Activated CD4-positive, alpha-beta T cell treated with anti-CD3 and anti-CD28 coated beads for 36 hours (primary cell): ENCODE measurements at regions of chr4 and their contacts with region 1.

Region 1: DNA sequence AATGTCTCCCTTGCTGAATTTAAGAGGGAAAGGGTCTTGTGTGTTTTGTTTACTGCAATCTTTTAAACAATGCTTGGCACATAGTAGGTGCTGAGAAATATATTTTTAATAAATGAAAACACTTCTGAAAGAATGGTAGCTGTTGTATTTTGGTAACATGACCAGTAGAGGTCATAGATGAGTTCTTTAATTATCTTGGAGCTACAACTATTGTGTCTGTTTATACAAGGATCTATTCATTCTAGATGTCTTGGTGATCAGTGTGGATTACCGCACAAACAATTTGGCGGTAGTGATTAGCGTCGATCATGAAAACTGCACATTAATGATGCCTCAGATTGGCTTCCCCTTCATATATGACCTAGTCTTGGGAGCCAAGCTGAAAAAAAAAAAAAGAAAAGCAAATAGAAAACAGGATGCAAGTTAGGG is 21.4 kb upstream of the SCRG1 start:
- DNase-seq: no peak
- ATAC-seq: no peak
- H3K4me3 Mint-ChIP-seq: no peak overlapping the region
- H3K27ac Mint-ChIP-seq: no peak overlapping the region
- H3K4me1 Mint-ChIP-seq: peaks cover 8% of the 10 kb centered on the region
- H3K27me3 Mint-ChIP-seq: no peaks in the 10 kb centered on the region

Region 2: DNA sequence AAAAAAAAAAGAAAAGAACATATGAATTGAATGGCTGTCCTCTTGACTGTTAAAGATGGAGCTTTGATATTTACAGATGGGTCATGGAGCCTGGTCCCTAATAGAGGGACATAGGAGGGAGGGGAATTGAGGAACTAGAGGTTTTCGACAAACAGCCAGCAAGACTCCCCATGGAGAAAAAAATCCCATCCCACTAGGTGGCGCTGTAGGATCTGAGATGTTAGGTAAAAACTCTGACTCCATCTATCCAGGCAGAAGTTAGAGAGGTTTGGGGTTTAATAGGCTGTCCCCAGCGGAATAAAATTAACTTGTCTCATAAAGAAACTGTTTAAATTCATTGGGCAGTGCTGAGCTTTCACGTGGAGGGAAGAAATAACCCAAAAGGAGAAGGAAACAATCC is 132.0 kb before region 1 on chr4:
- CTCF ChIA-PET with region 1: interaction called, 6 read pairs
- POLR2A ChIA-PET with region 1: no interaction called
- intact Hi-C with region 1: loop called (anchors 1 kb)
- DNase-seq: peak; percentile 86
- ATAC-seq: peak; percentile 46
- H3K4me3 Mint-ChIP-seq: no peak overlapping the region
- H3K27ac Mint-ChIP-seq: peak overlapping the region; percentile 62
- H3K4me1 Mint-ChIP-seq: peaks cover 16% of the 10 kb centered on the region
- H3K27me3 Mint-ChIP-seq: no peaks in the 10 kb centered on the region

Region 3: GRCh38 chr4:173301518-173302201 is 118.7 kb before region 1 on chr4:
- CTCF ChIA-PET with region 1: interaction called, 18 read pairs
- POLR2A ChIA-PET with region 1: no interaction called
- intact Hi-C with region 1: no loop called
- DNase-seq: peak; percentile 31
- ATAC-seq: peak; percentile 81
- H3K4me3 Mint-ChIP-seq: no peak overlapping the region
- H3K27ac Mint-ChIP-seq: no peak overlapping the region
- H3K4me1 Mint-ChIP-seq: peaks cover 2% of the 10 kb centered on the region
- H3K27me3 Mint-ChIP-seq: no peaks in the 10 kb centered on the region

Region 4: GRCh38 chr4:173318648-173319211 is 101.6 kb before region 1 on chr4:
- CTCF ChIA-PET with region 1: interaction called, 11 read pairs
- POLR2A ChIA-PET with region 1: no interaction called
- intact Hi-C with region 1: loop called (anchors 1 kb)
- DNase-seq: no peak
- ATAC-seq: peak; percentile 88
- H3K4me3 Mint-ChIP-seq: no peak overlapping the region
- H3K27ac Mint-ChIP-seq: no peak overlapping the region
- H3K4me1 Mint-ChIP-seq: peaks cover 11% of the 10 kb centered on the region
- H3K27me3 Mint-ChIP-seq: no peaks in the 10 kb centered on the region

Region 5: DNA sequence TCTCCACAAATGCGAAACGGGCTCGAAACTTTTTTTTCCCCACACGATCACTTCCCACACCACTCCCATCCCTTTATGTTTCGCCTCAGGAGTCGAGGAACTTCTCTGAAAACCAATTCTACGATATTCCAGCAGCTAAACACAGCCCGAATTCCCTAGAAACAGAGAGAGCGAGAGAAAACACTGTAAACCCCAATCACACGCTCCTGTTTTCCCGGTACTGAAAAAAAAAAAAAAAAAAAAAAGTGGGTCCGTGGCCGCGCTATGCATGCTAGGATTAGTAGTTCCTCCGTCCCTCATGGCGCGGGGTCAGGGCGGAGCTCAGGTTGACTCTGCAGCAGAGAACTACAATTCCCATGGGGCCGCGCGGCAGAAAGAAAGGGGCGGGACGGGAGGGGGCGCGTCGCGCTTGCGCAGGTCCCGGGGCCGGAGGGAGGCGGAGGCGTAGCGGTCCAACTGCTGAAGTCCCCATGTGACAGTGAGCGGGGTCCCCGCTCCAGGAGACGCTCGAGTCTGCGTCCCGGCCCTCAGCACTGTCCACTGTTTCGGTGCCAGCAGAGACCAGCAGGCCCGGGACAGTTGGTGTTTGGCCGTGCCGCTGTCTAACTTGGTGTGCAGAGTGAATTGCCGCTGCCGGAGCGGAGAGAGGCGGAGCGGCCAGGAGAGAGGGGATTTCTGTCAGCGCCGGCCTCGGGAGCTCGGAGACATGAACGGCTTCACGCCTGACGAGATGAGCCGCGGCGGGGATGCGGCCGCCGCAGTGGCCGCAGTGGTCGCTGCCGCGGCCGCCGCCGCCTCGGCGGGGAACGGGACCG is 49.7 kb before region 1 on chr4 and contains the start of gene SAP30:
- CTCF ChIA-PET with region 1: interaction called, 8 read pairs
- POLR2A ChIA-PET with region 1: no interaction called
- intact Hi-C with region 1: loop called in 1 of 2 experiments (anchors 2 kb)
- DNase-seq: peak; percentile 99
- ATAC-seq: peak; percentile 88
- H3K4me3 Mint-ChIP-seq: peak within 1 kb of the TSS; percentile 93
- H3K27ac Mint-ChIP-seq: peak within 1 kb of the TSS; percentile 100
- H3K4me1 Mint-ChIP-seq: peaks cover 31% of the 10 kb centered on the region
- H3K27me3 Mint-ChIP-seq: peaks cover 8% of the 10 kb centered on the region
- total RNA-seq, gene SAP30: 22.0 to 29.3 TPM

Region 6: GRCh38 chr4:173494013-173494970 is 74.0 kb after region 1 on chr4:
- CTCF ChIA-PET with region 1: interaction called, 17 read pairs
- POLR2A ChIA-PET with region 1: no interaction called
- intact Hi-C with region 1: loop called (anchors 1 kb)
- DNase-seq: peak; percentile 79
- ATAC-seq: peak; percentile 97
- H3K4me3 Mint-ChIP-seq: peak overlapping the region; percentile 69
- H3K27ac Mint-ChIP-seq: peak overlapping the region; percentile 17
- H3K4me1 Mint-ChIP-seq: peaks cover 10% of the 10 kb centered on the region
- H3K27me3 Mint-ChIP-seq: peaks cover 33% of the 10 kb centered on the region

Region 7: GRCh38 chr4:173635395-173635794 is 215.1 kb after region 1 on chr4:
- CTCF ChIA-PET with region 1: no interaction called
- POLR2A ChIA-PET with region 1: no interaction called
- intact Hi-C with region 1: no loop called
- DNase-seq: no peak
- ATAC-seq: no peak
- H3K4me3 Mint-ChIP-seq: no peak overlapping the region
- H3K27ac Mint-ChIP-seq: no peak overlapping the region
- H3K4me1 Mint-ChIP-seq: no peaks in the 10 kb centered on the region
- H3K27me3 Mint-ChIP-seq: no peaks in the 10 kb centered on the region

Region 8: GRCh38 chr4:173698557-173699262 is 278.4 kb after region 1 on chr4:
- CTCF ChIA-PET with region 1: no interaction called
- POLR2A ChIA-PET with region 1: no interaction called
- intact Hi-C with region 1: no loop called
- DNase-seq: no peak
- ATAC-seq: no peak
- H3K4me3 Mint-ChIP-seq: no peak overlapping the region
- H3K27ac Mint-ChIP-seq: no peak overlapping the region
- H3K4me1 Mint-ChIP-seq: no peaks in the 10 kb centered on the region
- H3K27me3 Mint-ChIP-seq: no peaks in the 10 kb centered on the region

Region 9: GRCh38 chr4:174156239-174156826 is 736.0 kb after region 1 on chr4:
- CTCF ChIA-PET with region 1: no interaction called
- POLR2A ChIA-PET with region 1: no interaction called
- intact Hi-C with region 1: loop called in 1 of 2 experiments (anchors 5 kb)
- DNase-seq: no peak
- ATAC-seq: peak; percentile 68
- H3K4me3 Mint-ChIP-seq: no peak overlapping the region
- H3K27ac Mint-ChIP-seq: no peak overlapping the region
- H3K4me1 Mint-ChIP-seq: no peaks in the 10 kb centered on the region
- H3K27me3 Mint-ChIP-seq: peaks cover 22% of the 10 kb centered on the region